ENCODE measurements at regions of chr7 and their contacts with region 1.

Region 1: DNA sequence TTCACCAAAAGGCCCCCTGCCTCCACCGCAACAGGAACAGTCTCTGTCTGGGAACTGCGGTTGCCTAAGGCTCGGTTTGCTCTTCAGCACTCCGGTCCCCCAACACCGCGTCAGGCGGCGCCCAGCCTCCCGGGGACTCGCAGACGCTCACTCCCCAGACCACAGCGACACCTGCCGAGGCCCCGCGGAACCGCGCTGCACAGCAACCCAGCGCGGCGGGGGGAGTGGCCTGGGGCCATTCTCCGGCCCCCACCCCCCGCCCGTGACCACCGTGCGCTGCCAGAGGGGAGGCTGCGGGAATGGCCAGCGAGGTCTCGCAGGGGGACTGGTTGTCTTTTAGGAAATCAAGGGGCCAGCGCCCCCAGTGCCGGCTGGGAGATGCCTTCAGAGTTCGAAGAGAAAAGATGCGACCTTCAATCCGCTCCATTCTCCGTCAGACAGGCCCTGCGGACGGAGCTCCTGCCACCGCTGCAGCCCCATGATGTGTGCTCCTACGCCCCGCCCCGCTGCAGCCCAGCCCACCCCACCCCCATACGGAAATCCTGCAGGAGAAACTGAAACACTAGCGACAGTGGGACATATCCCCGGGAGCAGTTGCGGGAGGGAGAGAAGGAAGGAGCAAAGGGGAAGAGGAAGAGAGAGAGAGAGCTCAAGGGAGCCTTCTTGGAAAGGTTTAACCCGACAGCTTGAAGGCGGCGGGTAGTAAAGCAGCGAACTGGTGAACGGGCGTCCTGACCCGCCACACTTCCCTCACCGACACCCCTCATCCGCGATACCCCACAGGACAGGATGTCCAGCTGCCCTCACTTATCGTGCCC is 137.4 kb upstream of the CDCA7L start:
- DNase-seq: peak; percentile 78 to 95 (median 89)
- H3K4me3 ChIP-seq: peak overlapping the region; percentile 37 to 85 (median 72)
- H3K27ac ChIP-seq: peak overlapping the region; percentile 13 to 99 (median 92)
- H3K27me3 ChIP-seq: peaks cover 0 to 4% (median 0%) of the 10 kb centered on the region in 45 donors
- CTCF ChIP-seq: peak; percentile 56 to 100 (median 96)

Region 2: DNA sequence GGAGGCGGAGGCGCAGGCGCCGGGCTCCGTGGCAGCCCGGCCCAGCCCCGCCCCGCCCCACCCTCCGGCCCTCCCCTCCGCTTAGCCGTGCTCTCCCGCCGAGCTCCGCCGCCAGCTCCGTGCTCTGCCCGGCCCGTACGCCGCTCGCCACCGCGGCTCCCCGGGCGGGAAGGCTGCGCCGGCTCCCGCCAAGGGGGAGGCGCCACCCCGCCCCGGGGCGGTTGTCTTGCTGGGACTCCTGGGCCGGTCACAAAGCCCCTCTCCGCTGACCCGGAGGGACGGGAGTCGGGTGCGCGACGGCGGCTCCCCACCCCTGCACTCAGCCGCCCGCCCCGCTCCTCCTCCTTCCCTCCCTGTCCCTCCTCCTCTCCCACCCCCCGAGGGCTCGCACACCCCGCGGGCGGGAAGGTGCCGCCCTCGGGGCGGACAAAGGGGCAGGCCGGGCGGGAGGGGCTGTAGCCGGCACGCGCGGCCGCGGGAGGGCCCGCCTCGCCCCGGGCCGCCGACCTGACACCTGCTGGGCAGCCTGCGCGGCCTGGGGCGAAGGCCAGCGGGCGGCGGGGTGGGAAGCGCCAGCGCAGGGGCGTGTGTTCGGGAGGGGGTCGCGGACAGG is 1284.9 kb before region 1 on chr7:
- intact Hi-C with region 1: loop called in 1 of 2 experiments (anchors 10 kb)
- DNase-seq: no peak
- H3K4me3 ChIP-seq: peak overlapping the region in 51 of 59 donors; percentile 20 to 68 (median 49)
- H3K27ac ChIP-seq: no peak overlapping the region
- H3K27me3 ChIP-seq: peaks cover 17 to 85% (median 65%) of the 10 kb centered on the region in 45 donors
- CTCF ChIP-seq: no peak

Region 3: GRCh38 chr7:21427182-21427870 is 655.8 kb before region 1 on chr7:
- intact Hi-C with region 1: loop called (anchors 2 to 5 kb)
- DNase-seq: peak; percentile 97 to 99 (median 98)
- H3K4me3 ChIP-seq: peak overlapping the region; percentile 53 to 98 (median 91)
- H3K27ac ChIP-seq: peak overlapping the region; percentile 67 to 99 (median 97)
- H3K27me3 ChIP-seq: no peaks in the 10 kb centered on the region
- CTCF ChIP-seq: peak in 37 of 56 donors; percentile 3 to 55 (median 31)

Region 4: GRCh38 chr7:21767300-21767900 is 315.7 kb before region 1 on chr7:
- intact Hi-C with region 1: loop called in 1 of 2 experiments (anchors 2 kb)
- DNase-seq: peak in 1 of 10 donors; percentile 33
- H3K4me3 ChIP-seq: no peak overlapping the region
- H3K27ac ChIP-seq: no peak overlapping the region
- H3K27me3 ChIP-seq: peaks cover 0 to 6% (median 0%) of the 10 kb centered on the region in 45 donors
- CTCF ChIP-seq: peak in 54 of 56 donors; percentile 29 to 79 (median 56)

Region 5: GRCh38 chr7:22001345-22002004 is 81.6 kb before region 1 on chr7:
- intact Hi-C with region 1: loop called in 1 of 2 experiments (anchors 2 kb)
- DNase-seq: no peak
- H3K4me3 ChIP-seq: peak overlapping the region in 29 of 59 donors; percentile 2 to 51 (median 28)
- H3K27ac ChIP-seq: no peak overlapping the region
- H3K27me3 ChIP-seq: peaks cover 0 to 6% (median 0%) of the 10 kb centered on the region in 45 donors
- CTCF ChIP-seq: peak; percentile 72 to 98 (median 88)

Measured in dorsolateral prefrontal cortex (tissue), 120 donors.